Testis (tissue), 5 donors: ENCODE measurements at regions of chr1 and their contacts with region 1.

Region 1: DNA sequence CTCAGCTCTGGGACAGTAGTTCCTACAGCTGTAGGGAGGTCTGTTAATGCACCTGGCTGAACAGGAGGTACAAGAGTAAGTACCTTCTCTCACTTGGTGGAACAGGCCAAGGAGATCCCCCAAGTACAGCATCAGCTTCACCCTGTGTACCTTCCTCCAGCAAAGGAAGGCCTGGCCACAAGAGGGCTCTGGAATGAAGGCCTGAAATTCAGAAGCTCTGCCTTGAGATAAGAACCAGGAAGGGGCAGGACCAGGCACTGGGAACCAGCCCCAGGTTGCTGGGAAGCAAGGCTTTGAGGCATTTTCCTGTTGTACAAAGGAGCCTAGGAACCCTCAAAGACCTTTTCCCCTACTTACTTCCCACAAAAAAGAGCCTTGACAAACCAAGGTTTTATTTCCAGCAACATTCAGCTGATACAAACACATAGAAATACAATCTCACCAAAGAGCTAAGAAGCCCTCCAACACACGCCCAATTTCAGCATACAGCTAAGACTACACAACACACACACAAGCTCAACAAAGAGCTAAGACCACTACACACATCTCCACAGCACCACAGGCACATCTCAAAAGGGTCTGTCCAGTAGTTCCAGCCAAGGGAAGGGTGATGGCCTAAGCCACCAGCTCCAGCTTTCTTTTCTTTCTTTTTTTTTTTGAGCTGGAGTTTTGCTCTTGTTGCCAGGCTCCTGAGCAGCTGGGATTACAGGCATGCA is 23.5 kb downstream of the F11R start:
- DNase-seq: peak; percentile 79
- H3K4me3 ChIP-seq: no peak overlapping the region
- H3K27ac ChIP-seq: peak overlapping the region in 1 of 2 donors; percentile 30
- H3K4me1 ChIP-seq: no peaks in the 10 kb centered on the region
- H3K27me3 ChIP-seq: no peaks in the 10 kb centered on the region
- CTCF ChIP-seq: peak; percentile 40 to 57 (median 49)
- POLR2A ChIP-seq: no peak

Region 2: DNA sequence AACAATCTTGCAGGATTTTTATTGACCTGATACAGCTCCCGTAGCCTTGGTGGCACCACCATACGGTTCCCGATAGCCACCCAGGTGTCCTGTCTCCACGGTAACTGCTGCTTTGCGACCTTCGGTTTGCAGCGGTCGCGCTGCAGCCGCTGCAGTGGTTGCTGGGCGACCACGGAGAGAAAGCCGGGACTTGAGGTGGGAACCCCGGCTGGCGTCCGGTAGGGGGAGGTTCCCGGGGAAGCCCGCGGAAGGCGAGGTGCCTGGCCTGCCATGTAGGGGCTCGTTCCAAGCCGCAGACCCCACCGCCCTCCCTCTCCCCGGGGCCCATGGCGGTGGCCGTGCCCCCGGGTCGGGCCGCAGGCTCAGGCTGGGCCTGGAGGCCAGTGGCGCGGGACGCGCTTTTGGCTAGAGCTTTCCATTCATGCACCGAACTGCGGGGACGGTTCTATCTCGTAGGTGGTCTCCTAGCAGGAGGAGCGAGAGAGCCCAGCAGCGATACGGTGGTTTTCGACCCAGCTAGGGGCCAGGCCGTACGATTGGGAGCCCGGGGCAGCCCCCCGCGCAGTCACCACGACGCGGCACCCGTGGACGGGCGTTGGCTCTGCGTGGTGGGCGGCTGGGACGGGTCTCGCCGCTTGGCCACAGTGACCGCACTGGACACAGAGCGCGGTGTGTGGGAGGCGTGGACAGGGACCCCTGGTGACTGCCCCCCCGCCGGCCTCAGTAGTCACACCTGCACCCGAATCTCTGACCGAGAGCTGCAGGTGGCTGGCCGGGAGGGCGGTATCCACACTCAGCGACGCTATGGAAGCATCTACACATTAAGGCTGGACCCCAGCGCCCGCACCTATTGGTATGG is 101.0 kb after region 1 on chr1 and contains the start of gene KLHDC9:
- intact Hi-C with region 1: loop called (anchors 10 kb)
- DNase-seq: peak; percentile 86
- H3K4me3 ChIP-seq: peak within 1 kb of the TSS; percentile 64 to 75
- H3K27ac ChIP-seq: peak within 1 kb of the TSS; percentile 22 to 66
- H3K4me1 ChIP-seq: peaks cover 5% of the 10 kb centered on the region
- H3K27me3 ChIP-seq: no peaks in the 10 kb centered on the region
- CTCF ChIP-seq: peak in 1 of 3 experiments; percentile 19
- POLR2A ChIP-seq: no peak
- total RNA-seq, gene KLHDC9: 55.8 to 57.2 TPM